ENCODE measurements at regions of chr1 and their contacts with region 1.

Region 1: DNA sequence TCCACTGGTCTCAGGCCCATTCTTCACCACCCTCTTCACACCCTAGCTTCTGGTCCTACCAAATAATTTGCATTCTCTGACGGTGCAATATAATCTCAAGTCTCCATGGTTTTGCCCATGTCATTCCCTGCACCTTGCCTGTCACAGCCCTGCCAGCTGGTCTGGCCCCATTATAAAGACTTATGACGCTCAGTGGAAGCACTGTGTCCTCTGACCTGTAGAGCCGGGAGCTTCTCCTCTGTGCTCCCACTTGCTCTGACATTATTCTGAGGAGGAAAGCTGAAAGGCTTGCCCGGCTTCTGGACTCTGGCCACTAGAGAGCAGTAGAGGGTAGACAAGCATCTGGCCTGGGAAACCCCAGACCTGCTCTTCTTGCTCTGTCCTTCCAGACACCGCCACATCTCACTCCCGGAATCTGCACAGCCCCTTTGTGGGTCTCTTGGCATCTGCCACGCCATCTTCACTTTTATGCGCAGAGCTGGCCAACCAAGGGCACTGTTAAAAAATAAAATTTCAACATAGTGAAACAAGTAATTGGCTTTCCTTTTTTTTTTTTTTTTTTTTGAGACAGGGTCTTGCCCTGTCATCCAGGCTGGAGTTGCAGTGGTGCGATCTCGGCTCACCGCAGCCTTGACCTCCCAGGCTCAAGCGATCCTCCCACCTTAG is 44.4 kb downstream of the NENF start:
- DNase-seq: peak; percentile 67 to 81
- H3K4me3 ChIP-seq: no peak overlapping the region
- H3K27ac ChIP-seq: no peak overlapping the region
- H3K4me1 ChIP-seq: peaks cover 0 to 2% (median 0%) of the 10 kb centered on the region in 4 experiments; a peak in 1 of 7 replicates
- H3K27me3 ChIP-seq: no peaks in the 10 kb centered on the region
- CTCF ChIP-seq: peak; percentile 75 to 95 (median 93)
- EP300 ChIP-seq: no peak
- POLR2A ChIP-seq: no peak
- RAD21 ChIP-seq: peak; percentile 94 to 97

Region 2: GRCh38 chr1:212355230-212355969 is 121.7 kb before region 1 on chr1:
- CTCF ChIA-PET with region 1: no interaction called
- POLR2A ChIA-PET with region 1: no interaction called
- DNase-seq: no peak
- H3K4me3 ChIP-seq: no peak overlapping the region
- H3K27ac ChIP-seq: no peak overlapping the region
- H3K4me1 ChIP-seq: no peaks in the 10 kb centered on the region
- H3K27me3 ChIP-seq: no peaks in the 10 kb centered on the region
- CTCF ChIP-seq: no peak
- EP300 ChIP-seq: no peak
- POLR2A ChIP-seq: no peak
- RAD21 ChIP-seq: no peak

Region 3: DNA sequence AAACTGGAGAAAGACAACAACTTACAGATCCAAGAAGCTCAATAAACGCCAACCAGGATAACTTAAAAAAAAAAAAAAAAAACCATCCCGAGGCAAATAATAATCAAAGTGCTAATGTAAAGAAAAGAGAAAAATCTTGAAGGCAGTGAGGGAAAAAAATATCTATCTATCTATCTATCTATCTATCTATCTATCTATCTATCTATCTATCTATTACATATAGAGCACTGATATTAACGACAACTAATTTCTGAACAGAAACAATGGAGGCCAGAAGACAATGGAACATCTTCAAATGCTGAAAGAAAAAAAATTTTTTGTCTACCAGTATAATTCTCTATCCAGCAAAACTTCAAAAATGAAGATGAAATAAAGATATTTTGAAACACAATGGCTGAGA is 80.5 kb before region 1 on chr1:
- CTCF ChIA-PET with region 1: no interaction called
- POLR2A ChIA-PET with region 1: no interaction called
- DNase-seq: no peak
- H3K4me3 ChIP-seq: no peak overlapping the region
- H3K27ac ChIP-seq: no peak overlapping the region
- H3K4me1 ChIP-seq: no peaks in the 10 kb centered on the region
- H3K27me3 ChIP-seq: no peaks in the 10 kb centered on the region
- CTCF ChIP-seq: no peak
- EP300 ChIP-seq: no peak
- POLR2A ChIP-seq: no peak
- RAD21 ChIP-seq: no peak

Region 4: GRCh38 chr1:212463565-212464285 is 13.4 kb before region 1 on chr1:
- CTCF ChIA-PET with region 1: interaction called, 143 read pairs
- POLR2A ChIA-PET with region 1: no interaction called
- DNase-seq: no peak
- H3K4me3 ChIP-seq: no peak overlapping the region
- H3K27ac ChIP-seq: no peak overlapping the region
- H3K4me1 ChIP-seq: peaks cover 0 to 9% (median 1%) of the 10 kb centered on the region in 4 experiments; a peak in 2 of 7 replicates
- H3K27me3 ChIP-seq: no peaks in the 10 kb centered on the region
- CTCF ChIP-seq: no peak
- EP300 ChIP-seq: no peak
- POLR2A ChIP-seq: no peak
- RAD21 ChIP-seq: no peak

Region 5: DNA sequence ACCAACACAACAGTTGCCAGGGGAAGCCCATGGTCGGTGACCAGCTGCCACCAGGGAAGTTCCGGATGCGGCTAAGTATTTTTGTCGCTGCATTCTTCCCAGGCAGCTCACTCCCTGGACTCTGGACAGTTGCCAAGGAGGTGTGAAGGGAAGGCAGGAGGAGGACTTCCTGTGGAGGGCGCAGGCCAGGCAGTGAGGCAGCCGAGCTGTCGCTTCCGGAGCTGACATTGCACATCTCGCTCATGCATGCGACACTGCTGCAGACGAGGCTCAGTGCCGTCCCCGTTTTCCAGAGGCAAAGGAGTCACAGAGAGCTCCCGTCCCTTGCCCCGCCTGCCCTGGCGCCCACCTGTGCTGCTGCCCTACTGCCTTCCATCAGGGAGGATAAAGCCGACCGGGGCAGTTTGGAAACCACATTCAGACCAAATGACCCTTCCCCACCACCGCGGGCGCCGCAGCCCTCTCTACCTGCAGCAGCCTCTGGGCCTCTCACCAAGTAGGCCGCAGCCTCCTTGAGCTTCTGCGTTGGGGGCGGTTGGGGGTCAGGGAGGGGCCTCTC is 37.0 kb after region 1 on chr1:
- CTCF ChIA-PET with region 1: interaction called, 30 read pairs
- POLR2A ChIA-PET with region 1: no interaction called
- DNase-seq: peak in 1 of 2 experiments; percentile 70
- H3K4me3 ChIP-seq: peak overlapping the region in 1 of 4 experiments; percentile 53; a peak in 2 of 8 replicates
- H3K27ac ChIP-seq: no peak overlapping the region
- H3K4me1 ChIP-seq: peaks cover 1 to 11% (median 7%) of the 10 kb centered on the region in 4 experiments
- H3K27me3 ChIP-seq: peaks cover 8 to 41% (median 29%) of the 10 kb centered on the region in 4 experiments
- CTCF ChIP-seq: no peak
- EP300 ChIP-seq: no peak
- POLR2A ChIP-seq: no peak
- RAD21 ChIP-seq: no peak

Region 6: DNA sequence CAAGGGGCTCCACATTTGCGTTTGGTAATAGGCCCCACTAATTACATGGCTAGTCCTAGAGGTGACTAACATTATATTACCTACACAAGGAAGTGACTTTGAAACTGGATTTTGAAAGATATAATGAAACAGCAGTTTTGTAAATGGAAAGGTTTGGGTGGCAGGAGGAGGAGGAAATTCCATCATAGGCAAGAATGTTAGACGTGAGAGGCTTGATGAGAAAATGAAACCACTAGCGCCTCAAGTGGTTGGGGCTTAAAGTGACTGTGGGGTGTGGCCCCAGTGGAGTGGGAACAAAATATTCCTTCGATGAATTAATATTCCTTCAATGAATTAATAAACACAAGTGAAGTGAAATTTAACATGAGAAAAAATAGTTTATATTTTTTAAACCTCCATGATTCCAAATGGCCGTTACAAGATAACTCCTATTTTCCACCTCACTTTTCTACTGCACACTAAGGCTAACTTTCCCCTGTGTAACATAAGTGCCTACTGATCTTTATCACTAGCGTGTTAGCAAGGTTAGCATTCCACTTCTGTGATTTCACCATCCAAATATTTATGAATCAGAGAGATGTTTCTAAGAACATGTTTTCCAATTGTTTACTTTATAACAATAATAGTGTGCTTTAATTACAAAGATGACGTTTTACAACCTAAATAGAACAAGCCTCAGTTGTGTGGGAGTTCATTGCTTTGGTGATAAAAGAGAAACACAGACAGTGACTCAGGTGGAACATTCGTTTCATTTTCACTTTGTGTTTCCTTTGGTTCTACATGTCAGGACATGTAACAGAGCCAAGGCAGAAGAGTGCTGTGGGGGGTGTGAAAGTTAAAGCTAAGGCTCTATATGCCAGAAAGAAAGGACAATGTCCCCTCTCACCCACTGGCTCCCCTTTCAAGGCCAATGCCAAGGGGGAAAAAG is 118.9 kb after region 1 on chr1:
- CTCF ChIA-PET with region 1: interaction called, 17 read pairs
- POLR2A ChIA-PET with region 1: interaction called, 3 read pairs
- DNase-seq: no peak
- H3K4me3 ChIP-seq: no peak overlapping the region
- H3K27ac ChIP-seq: peak overlapping the region; percentile 30; the same call in 1 of the 2 replicates
- H3K4me1 ChIP-seq: peaks cover 0 to 13% (median 3%) of the 10 kb centered on the region in 4 experiments; a peak in 6 of 7 replicates
- H3K27me3 ChIP-seq: no peaks in the 10 kb centered on the region; a peak in 1 of 7 replicates
- CTCF ChIP-seq: peak; percentile 57 to 67 (median 60)
- EP300 ChIP-seq: no peak
- POLR2A ChIP-seq: no peak
- RAD21 ChIP-seq: peak; percentile 50 to 59

Region 7: DNA sequence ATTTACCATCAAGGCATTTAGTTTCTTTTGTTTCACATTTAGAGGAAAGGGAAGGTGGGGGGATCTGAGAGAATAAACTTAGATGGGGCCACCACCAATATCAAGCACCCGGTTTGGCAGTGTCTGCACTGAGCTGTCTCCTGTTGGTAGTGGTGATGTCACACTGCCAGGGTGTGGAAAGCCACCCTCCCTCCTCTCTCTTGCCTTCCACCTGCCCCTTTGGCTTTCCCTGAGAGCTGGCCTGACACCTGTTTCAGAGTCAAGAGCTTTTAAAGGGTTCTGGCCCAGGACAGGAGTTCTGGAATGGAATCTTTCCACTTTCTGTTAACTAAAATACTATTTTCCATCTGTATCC is 144.8 kb after region 1 on chr1:
- CTCF ChIA-PET with region 1: interaction called, 11 read pairs
- POLR2A ChIA-PET with region 1: interaction called, 3 read pairs
- DNase-seq: no peak
- H3K4me3 ChIP-seq: no peak overlapping the region
- H3K27ac ChIP-seq: no peak overlapping the region
- H3K4me1 ChIP-seq: no peaks in the 10 kb centered on the region
- H3K27me3 ChIP-seq: no peaks in the 10 kb centered on the region
- CTCF ChIP-seq: no peak
- EP300 ChIP-seq: no peak
- POLR2A ChIP-seq: no peak
- RAD21 ChIP-seq: no peak

Region 8: GRCh38 chr1:212665241-212666115 is 188.3 kb after region 1 on chr1:
- CTCF ChIA-PET with region 1: interaction called, 24 read pairs
- POLR2A ChIA-PET with region 1: no interaction called
- DNase-seq: peak in 1 of 2 experiments; percentile 95
- H3K4me3 ChIP-seq: peak overlapping the region; percentile 34 to 77 (median 62)
- H3K27ac ChIP-seq: no peak overlapping the region
- H3K4me1 ChIP-seq: no peaks in the 10 kb centered on the region; a peak in 1 of 7 replicates
- H3K27me3 ChIP-seq: peaks cover 0 to 9% (median 5%) of the 10 kb centered on the region in 4 experiments; a peak in 4 of 7 replicates
- CTCF ChIP-seq: peak; percentile 95 to 96 (median 96)
- EP300 ChIP-seq: no peak
- POLR2A ChIP-seq: no peak
- RAD21 ChIP-seq: peak; percentile 90 to 94

Measured in H1 (cell line).